Caco-2 (cell line): ENCODE measurements at regions of chr1 and their contacts with region 1.

Region 1: GRCh38 chr1:53031727-53032126 is 30.3 kb upstream of the PODN start:
- DNase-seq: no peak
- H3K4me3 ChIP-seq: no peak overlapping the region
- H3K4me3 Mint-ChIP-seq: no peak overlapping the region
- H3K27ac Mint-ChIP-seq: no peak overlapping the region
- H3K4me1 ChIP-seq: peaks cover 12% of the 10 kb centered on the region
- H3K4me1 Mint-ChIP-seq: peaks cover 7% of the 10 kb centered on the region
- H3K27me3 ChIP-seq: no peaks in the 10 kb centered on the region
- H3K27me3 Mint-ChIP-seq: no peaks in the 10 kb centered on the region
- CTCF ChIP-seq: no peak

Region 2: GRCh38 chr1:52892424-52893215 is 139.1 kb before region 1 on chr1:
- CTCF ChIA-PET with region 1: interaction called, 12 read pairs
- POLR2A ChIA-PET with region 1: no interaction called
- intact Hi-C with region 1: no loop called
- DNase-seq: no peak
- H3K4me3 ChIP-seq: no peak overlapping the region
- H3K4me3 Mint-ChIP-seq: no peak overlapping the region
- H3K27ac Mint-ChIP-seq: no peak overlapping the region
- H3K4me1 ChIP-seq: no peaks in the 10 kb centered on the region
- H3K4me1 Mint-ChIP-seq: no peaks in the 10 kb centered on the region
- H3K27me3 ChIP-seq: no peaks in the 10 kb centered on the region
- H3K27me3 Mint-ChIP-seq: no peaks in the 10 kb centered on the region
- CTCF ChIP-seq: no peak

Region 3: GRCh38 chr1:52996653-52997052 is 35.1 kb before region 1 on chr1:
- CTCF ChIA-PET with region 1: no interaction called
- POLR2A ChIA-PET with region 1: no interaction called
- intact Hi-C with region 1: no loop called
- DNase-seq: no peak
- H3K4me3 ChIP-seq: no peak overlapping the region
- H3K4me3 Mint-ChIP-seq: no peak overlapping the region
- H3K27ac Mint-ChIP-seq: no peak overlapping the region
- H3K4me1 ChIP-seq: no peaks in the 10 kb centered on the region
- H3K4me1 Mint-ChIP-seq: no peaks in the 10 kb centered on the region
- H3K27me3 ChIP-seq: no peaks in the 10 kb centered on the region
- H3K27me3 Mint-ChIP-seq: no peaks in the 10 kb centered on the region
- CTCF ChIP-seq: no peak

Region 4: DNA sequence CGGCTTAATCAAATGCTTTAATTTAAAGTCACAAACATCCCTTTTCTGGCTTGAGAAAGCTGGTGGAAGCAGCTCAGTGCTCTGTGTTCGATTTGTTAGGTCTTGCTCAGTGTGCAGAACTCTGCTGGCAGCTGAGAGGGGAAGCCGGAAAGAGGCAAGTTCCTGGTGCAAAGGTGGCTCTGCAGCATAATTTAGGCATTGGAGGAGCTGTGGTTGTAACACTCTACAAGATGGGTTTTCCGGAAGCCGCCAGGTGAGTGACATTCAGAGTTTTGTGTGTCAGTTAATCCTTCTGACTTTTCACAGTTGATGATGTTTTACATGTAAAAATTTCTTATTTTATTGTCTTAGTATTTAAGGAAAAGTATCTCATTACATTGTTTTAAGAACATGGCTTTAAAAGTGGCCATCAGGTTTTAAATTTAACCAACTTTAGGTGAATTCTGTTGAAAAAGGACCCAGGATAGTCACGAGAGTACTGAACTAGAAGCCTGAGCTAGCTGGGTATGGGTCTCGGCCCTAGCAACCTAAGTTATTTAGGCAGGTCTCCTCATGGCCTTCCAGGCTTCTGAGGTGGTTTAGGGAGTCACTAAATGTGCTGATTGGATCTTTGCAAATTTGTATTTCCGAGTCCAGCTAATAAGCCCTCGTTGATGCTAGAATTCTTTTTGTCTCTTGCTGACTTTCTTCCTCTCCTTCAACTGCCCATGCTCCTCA is 16.8 kb before region 1 on chr1:
- CTCF ChIA-PET with region 1: no interaction called
- POLR2A ChIA-PET with region 1: no interaction called
- intact Hi-C with region 1: no loop called
- DNase-seq: peak; percentile 86 to 90
- H3K4me3 ChIP-seq: peak overlapping the region; percentile 37
- H3K4me3 Mint-ChIP-seq: peak overlapping the region; percentile 92
- H3K27ac Mint-ChIP-seq: peak overlapping the region; percentile 86
- H3K4me1 ChIP-seq: peaks cover 4% of the 10 kb centered on the region; the same call in 1 of the 2 replicates
- H3K4me1 Mint-ChIP-seq: peaks cover 14% of the 10 kb centered on the region
- H3K27me3 ChIP-seq: no peaks in the 10 kb centered on the region
- H3K27me3 Mint-ChIP-seq: no peaks in the 10 kb centered on the region
- CTCF ChIP-seq: no peak